Ascending aorta (tissue), 2 donors: ENCODE measurements at regions of chr11 and their contacts with region 1.

Region 1: DNA sequence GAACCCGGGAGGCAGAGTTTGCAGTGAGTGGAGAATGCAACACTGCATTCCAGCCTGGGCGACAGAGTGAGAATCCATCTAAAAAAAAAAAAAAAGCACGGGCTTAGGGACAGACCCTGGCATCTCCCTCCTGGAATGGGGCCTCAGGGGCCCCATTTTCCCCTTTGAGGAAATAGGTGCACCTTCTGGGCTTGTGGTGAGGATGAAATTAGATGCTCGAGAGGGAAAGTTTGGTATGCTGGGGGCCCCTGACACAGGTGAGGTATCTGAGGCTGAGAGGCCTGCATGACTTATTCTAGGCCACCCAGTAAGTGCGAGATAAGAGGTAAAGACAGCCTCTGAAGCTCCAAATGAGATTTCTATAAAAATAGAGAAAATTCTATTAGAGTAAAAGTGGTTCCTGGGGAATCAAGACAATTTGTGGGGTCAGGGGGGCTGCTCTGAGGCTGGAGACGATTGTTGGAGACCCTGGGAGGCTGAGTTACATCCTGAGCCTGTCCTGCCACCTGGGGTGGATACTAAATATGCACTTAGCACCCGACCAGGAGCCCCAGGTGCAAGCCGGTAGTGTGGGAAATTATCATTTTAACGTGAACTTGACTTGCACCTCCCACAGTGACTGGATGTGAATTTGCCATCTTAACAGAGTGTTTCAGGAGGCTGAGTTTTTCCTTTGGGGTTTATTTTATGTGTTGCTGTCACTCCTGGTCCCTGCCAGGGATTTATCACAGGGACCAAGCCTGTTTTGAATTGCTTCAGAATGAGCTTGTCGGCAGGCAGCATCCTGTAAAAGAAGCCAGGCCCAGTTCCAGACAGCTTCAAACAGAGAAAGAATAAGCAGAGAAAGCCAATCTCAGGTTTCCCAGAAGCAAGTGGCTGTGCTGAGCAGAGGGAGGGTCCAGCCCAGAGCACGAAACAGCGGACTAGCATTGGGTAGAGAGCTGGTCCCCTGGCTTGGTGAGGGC is 48.4 kb upstream of the TSKU start:
- DNase-seq: no peak
- H3K4me3 ChIP-seq: no peak overlapping the region
- H3K27ac ChIP-seq: no peak overlapping the region
- H3K4me1 ChIP-seq: no peaks in the 10 kb centered on the region
- H3K27me3 ChIP-seq: no peaks in the 10 kb centered on the region
- CTCF ChIP-seq: no peak

Region 2: DNA sequence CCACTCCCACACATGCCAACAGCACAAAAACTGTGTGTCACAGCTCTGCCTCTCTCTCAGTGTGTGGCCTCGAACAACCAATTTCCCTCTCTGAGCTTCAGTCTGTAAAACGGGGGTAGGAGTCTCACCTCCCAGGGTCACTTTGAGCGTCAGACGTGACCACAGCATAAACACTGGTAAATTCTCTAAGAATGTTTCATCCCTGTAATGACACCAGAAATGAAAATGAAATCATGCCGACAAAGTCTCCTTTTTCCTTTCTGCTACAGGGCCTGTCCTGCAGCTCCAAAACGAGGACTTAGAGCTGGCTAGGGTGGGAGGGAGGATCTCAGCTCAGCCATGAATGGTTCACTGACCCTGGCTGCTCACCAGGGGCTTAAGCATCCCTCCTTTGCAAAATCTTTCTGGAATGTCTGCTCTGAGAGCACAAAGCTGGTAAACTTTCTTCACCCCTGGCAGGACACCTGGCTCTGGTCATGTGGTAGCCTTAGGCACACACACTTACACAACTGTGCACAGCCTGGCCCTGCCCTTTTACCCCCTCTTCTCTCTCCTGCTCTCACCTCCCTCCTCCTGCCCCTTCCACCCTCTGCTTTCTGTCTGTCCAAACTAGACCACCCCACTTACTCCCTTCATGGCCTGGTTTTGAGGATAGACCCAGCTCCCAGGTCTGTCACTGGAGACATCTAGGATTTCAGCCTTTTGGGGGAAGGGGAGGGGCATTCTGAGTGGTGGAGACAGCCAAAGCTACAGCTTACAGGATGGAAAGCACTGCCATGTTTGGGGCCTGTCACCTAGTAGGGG is 36.1 kb after region 1 on chr11:
- intact Hi-C with region 1: no loop called
- DNase-seq: peak in 1 of 2 donors; percentile 76
- H3K4me3 ChIP-seq: no peak overlapping the region
- H3K27ac ChIP-seq: peak overlapping the region; percentile 78 to 87
- H3K4me1 ChIP-seq: peaks cover 19 to 51% of the 10 kb centered on the region in 2 donors
- H3K27me3 ChIP-seq: no peaks in the 10 kb centered on the region
- CTCF ChIP-seq: no peak

Region 3: DNA sequence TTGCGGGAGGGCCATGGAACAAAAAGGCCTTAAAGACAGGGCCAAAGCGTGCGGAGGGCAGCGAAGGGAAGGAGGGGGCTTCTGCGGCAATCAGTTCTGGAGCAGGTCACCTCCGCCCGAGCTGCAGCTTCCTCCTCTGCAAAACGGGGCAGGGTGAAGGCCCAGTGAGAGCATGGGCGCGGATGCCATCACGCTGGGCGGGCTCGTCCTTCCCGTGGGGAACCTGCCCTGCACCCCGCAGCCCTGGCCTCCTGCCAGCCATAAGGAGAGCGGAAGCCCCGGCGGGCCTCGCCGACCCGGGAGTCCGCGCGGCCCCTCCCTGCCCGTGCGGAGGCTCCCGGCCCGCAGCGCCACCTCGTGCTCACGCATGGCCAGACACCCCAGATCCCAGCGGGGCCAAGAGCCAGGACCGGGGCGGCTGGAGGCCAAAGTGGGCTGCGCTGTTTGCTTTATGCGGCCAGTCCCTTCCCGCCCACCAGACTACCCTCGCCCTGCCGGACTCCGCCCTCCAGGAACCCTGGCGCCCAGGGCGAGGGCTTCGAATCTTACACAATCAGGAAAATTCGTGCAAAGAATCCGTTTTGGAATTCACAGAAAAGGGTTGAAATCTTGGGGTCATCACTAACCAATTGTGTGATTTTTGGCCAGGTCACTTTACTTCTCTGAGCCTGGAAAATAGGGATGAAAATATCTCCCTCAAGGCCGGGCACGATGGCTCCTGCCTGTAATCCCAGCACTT is 64.5 kb after region 1 on chr11:
- intact Hi-C with region 1: loop called (anchors 1 kb)
- DNase-seq: peak in 1 of 2 donors; percentile 93
- H3K4me3 ChIP-seq: peak overlapping the region; percentile 37 to 46
- H3K27ac ChIP-seq: peak overlapping the region; percentile 36 to 79
- H3K4me1 ChIP-seq: peaks cover 0 to 7% of the 10 kb centered on the region in 2 donors
- H3K27me3 ChIP-seq: no peaks in the 10 kb centered on the region
- CTCF ChIP-seq: peak; percentile 95 to 96 (median 96)